GM10248 (cell line): ENCODE measurements at regions of chr1 and their contacts with region 1.

Region 1: GRCh38 chr1:201559679-201560162 is 20.8 kb downstream of the NAV1 start:
- DNase-seq: peak; percentile 86
- CTCF ChIP-seq: peak; percentile 91

Region 2: DNA sequence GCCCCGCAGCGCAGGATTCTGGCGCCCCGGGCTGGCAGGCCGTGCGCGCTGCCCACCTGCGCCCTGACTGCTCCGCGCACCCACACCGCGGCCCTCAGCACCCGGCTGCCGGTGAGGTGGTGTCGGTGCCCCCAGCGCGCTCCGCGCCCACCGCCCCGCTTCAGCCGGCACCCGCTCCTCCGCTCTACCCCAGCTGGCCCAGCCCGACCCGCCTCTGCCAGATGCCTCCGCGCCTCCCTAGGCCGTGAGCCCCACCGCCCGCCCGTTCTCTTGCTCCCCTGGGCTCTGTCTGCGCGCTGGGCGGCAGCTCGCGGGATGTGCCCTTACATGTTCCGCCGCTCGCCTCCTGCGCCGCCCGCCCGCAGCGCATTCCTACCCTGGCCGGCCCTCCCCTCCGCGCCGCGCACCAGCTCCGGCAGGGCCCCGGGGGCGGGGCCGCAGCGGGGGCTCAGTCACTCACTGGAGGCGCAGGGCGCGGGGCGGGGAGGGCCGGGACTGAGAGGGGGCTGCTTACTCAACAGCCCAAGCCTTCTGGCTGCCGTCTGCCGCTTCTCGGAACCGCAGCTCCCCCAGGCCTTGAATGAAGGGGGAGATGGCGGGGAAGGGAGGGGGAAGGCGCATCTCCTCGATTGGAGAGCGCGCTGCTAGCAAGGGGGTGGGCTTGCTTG is 90.7 kb before region 1 on chr1 and contains the start of gene PHLDA3:
- CTCF ChIA-PET with region 1: no interaction called
- POLR2A ChIA-PET with region 1: no interaction called
- DNase-seq: peak; percentile 81
- CTCF ChIP-seq: no peak

Region 3: GRCh38 chr1:201511941-201512539 is 47.7 kb before region 1 on chr1:
- CTCF ChIA-PET with region 1: interaction called, 11 read pairs
- POLR2A ChIA-PET with region 1: no interaction called
- DNase-seq: peak; percentile 65
- CTCF ChIP-seq: no peak

Region 4: GRCh38 chr1:201538612-201539551 is 20.8 kb before region 1 on chr1 and contains the start of gene NAV1:
- CTCF ChIA-PET with region 1: interaction called, 63 read pairs
- POLR2A ChIA-PET with region 1: no interaction called
- DNase-seq: peak; percentile 19
- CTCF ChIP-seq: no peak

Region 5: GRCh38 chr1:201582705-201583442 is 23.2 kb after region 1 on chr1:
- CTCF ChIA-PET with region 1: interaction called, 21 read pairs
- POLR2A ChIA-PET with region 1: no interaction called
- DNase-seq: no peak
- CTCF ChIP-seq: no peak

Region 6: GRCh38 chr1:201619513-201619912 is 59.8 kb after region 1 on chr1:
- CTCF ChIA-PET with region 1: no interaction called
- POLR2A ChIA-PET with region 1: no interaction called
- DNase-seq: no peak
- CTCF ChIP-seq: no peak

Region 7: DNA sequence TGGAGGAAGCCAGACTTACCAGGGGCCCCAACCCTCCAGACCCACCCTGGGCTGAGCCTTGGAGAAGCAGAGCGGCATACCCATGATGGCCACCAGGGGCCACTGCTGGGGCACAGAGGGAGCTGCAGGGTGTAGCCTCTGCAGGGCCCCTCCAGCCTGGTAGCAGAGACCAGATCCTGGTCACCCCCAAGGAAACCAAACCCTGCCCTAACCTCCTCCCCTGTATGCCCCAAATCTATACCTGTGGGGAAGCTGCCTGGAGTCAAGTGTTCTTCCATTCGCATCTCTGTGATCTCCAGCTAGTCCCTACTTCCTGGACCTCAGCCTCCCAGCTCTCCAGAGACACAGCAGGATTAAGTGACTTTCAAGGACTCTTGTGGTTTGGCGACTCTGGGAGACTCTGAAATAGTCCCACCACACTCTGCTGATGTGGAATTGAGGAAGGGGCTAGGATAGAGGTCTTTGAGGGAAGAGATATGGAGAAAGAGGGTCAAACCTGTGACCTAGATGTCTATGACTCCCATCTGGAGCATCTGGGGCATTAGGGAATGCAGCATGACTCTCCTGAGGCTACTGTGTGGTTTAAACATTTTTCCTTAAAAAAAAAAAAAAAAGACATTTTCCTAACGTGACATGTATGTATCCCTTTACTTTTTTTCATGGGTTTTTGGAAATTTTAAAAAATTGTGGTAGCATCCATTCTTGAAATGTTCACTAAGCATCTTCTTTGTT is 150.0 kb after region 1 on chr1:
- CTCF ChIA-PET with region 1: interaction called, 116 read pairs
- POLR2A ChIA-PET with region 1: no interaction called
- DNase-seq: peak; percentile 76
- CTCF ChIP-seq: peak; percentile 92

Region 8: GRCh38 chr1:201748335-201748734 is 188.6 kb after region 1 on chr1:
- CTCF ChIA-PET with region 1: no interaction called
- POLR2A ChIA-PET with region 1: no interaction called
- DNase-seq: no peak
- CTCF ChIP-seq: no peak

Region 9: GRCh38 chr1:201970334-201971159 is 410.8 kb after region 1 on chr1:
- CTCF ChIA-PET with region 1: interaction called, 14 read pairs
- POLR2A ChIA-PET with region 1: no interaction called
- DNase-seq: no peak
- CTCF ChIP-seq: no peak

Region 10: GRCh38 chr1:202184750-202185460 is 625.2 kb after region 1 on chr1:
- CTCF ChIA-PET with region 1: no interaction called
- POLR2A ChIA-PET with region 1: no interaction called
- DNase-seq: peak; percentile 69
- CTCF ChIP-seq: peak; percentile 89